ENCODE measurements at regions of chr5 and their contacts with region 1.

Region 1: GRCh38 chr5:138641547-138642298 is 66.5 kb upstream of the HSPA9 start:
- DNase-seq: peak; percentile 27
- ATAC-seq: peak; percentile 82
- H3K4me3 ChIP-seq: no peak overlapping the region
- H3K27ac ChIP-seq: no peak overlapping the region
- H3K4me1 ChIP-seq: no peaks in the 10 kb centered on the region
- H3K27me3 ChIP-seq: peaks cover 2% of the 10 kb centered on the region; the same call in 1 of the 2 replicates
- CTCF ChIP-seq: peak; percentile 93

Region 2: DNA sequence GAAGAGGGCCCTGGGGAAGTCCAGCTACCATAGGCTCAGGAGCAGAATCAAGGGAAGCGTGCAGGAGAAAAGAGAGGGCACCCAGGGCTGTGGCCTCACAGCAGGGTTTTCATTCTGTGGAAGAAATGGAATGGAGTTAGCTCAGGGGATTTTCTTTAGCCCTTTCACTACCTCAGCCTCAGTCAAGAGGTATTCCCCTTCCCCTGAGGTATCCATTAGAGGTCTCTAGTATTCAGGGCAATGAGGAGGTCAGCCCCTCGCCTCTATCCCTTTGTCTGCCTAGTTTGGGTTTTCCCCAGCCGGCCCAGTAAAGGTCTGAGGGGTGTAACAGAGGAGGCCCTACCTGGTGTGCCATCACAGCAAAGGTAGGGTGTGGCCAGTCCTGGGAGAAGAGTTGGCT is 388.8 kb before region 1 on chr5:
- CTCF ChIA-PET with region 1: no interaction called
- POLR2A ChIA-PET with region 1: no interaction called
- in situ Hi-C with region 1: no loop called
- intact Hi-C with region 1: no loop called
- DNase-seq: no peak
- ATAC-seq: no peak
- H3K4me3 ChIP-seq: no peak overlapping the region
- H3K27ac ChIP-seq: no peak overlapping the region
- H3K4me1 ChIP-seq: no peaks in the 10 kb centered on the region
- H3K27me3 ChIP-seq: no peaks in the 10 kb centered on the region; the same call in 1 of the 2 replicates
- CTCF ChIP-seq: no peak

Region 3: GRCh38 chr5:138748630-138749081 is 106.9 kb after region 1 on chr5:
- CTCF ChIA-PET with region 1: no interaction called
- POLR2A ChIA-PET with region 1: no interaction called
- in situ Hi-C with region 1: no loop called
- intact Hi-C with region 1: loop called (anchors 10 kb)
- DNase-seq: no peak
- ATAC-seq: no peak
- H3K4me3 ChIP-seq: no peak overlapping the region
- H3K27ac ChIP-seq: no peak overlapping the region
- H3K4me1 ChIP-seq: no peaks in the 10 kb centered on the region
- H3K27me3 ChIP-seq: no peaks in the 10 kb centered on the region
- CTCF ChIP-seq: no peak

Region 4: DNA sequence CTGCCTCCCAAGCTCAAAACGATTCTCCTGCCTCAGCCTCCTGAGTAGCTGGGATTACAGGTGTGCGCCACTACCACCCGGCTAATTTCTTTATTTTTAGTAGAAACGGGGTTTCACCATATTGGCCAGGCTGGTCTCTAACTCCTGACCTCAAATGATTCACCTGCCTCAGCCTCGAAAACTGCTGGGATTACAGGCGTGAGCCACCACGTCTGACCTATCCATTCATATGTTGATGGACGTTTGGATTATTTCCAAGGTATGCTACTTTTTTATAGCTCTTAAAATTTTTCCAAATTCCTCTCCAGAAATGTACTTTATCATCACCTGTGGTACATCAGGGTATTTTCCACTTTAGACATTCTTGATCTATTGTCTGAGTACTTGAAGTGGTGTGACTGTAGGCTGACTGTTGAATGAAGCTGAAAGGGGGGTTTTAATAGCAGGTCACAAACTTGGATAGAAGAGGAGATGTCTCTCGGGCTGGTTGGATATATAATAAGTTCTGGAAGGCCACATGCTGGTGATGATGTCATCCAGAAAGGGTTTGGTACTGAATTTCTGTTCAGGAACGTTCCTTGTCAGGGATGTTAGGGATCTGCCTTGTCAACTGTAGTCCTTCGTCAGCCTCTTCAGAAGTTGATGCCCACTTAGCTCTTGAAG is 118.9 kb after region 1 on chr5:
- CTCF ChIA-PET with region 1: interaction called, 12 read pairs
- POLR2A ChIA-PET with region 1: no interaction called
- in situ Hi-C with region 1: no loop called
- intact Hi-C with region 1: no loop called
- DNase-seq: no peak
- ATAC-seq: no peak
- H3K4me3 ChIP-seq: no peak overlapping the region
- H3K27ac ChIP-seq: no peak overlapping the region
- H3K4me1 ChIP-seq: 0 out of 2 replicates have a peak, but pooled peaks cover 1% of the 10 kb centered on the region
- H3K27me3 ChIP-seq: no peaks in the 10 kb centered on the region
- CTCF ChIP-seq: no peak

Region 5: DNA sequence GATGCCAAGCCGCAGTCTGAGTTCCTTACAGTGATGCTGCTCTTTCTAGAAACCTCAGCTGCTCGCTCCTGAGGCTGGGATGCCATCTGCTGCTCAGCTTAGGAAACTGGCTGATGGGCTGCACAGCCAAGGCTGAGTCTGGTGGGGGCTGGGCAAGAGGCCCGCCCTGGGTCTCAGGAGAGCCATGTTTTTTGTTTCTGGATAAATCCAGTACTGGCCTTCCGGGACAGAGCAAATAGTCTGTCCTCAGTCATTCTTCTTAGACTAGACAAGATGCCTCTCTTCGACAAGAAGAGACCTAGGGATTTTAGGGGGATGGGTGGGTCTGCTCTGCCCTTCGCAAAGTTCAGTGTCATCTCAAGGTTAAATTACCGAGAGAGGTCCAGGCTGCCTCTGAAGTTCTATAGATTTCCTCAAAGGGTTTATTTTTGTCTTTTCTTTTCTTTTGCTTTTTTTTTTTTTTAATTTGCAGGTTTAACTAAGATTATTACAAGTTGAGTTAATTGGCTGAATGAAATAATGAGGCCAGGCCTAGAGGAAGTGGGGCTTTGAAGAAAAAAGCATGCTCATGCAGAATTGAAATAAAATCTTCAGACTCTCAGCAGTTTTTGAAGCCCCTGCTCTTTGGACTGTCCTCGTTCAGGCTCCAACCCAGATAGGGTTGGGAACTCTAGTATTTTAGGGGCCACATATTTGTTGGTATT is 621.2 kb after region 1 on chr5:
- CTCF ChIA-PET with region 1: no interaction called
- POLR2A ChIA-PET with region 1: no interaction called
- in situ Hi-C with region 1: no loop called
- intact Hi-C with region 1: loop called (anchors 10 kb)
- DNase-seq: peak; percentile 71
- ATAC-seq: peak; percentile 100
- H3K4me3 ChIP-seq: no peak overlapping the region
- H3K27ac ChIP-seq: no peak overlapping the region
- H3K4me1 ChIP-seq: 0 out of 2 replicates have a peak, but pooled peaks cover 3% of the 10 kb centered on the region
- H3K27me3 ChIP-seq: no peaks in the 10 kb centered on the region
- CTCF ChIP-seq: peak; percentile 97